Activated T-helper 2 cell treated with anti-CD3 and anti-CD28 coated beads, Interferon-gamma antibody, Interleukin-2, Interleukin-4, amounts not matched to agents 10 μg/mL and 5 μg/mL and 100 μg/mL, durations not matched to agents 14 hours and 24 hours and 36 hours (primary cell): ENCODE measurements at regions of chr14 and their contacts with region 1.

Region 1: GRCh38 chr14:95561001-95561412 is 26.2 kb downstream of the GLRX5 start:
- DNase-seq: peak; percentile 80
- H3K4me3 Mint-ChIP-seq: no peak overlapping the region
- H3K27ac Mint-ChIP-seq: no peak overlapping the region
- H3K4me1 Mint-ChIP-seq: peaks cover 2% of the 10 kb centered on the region
- H3K27me3 Mint-ChIP-seq: peaks cover 9% of the 10 kb centered on the region

Region 2: GRCh38 chr14:95123891-95124579 is 437.0 kb before region 1 on chr14:
- intact Hi-C with region 1: no loop called
- DNase-seq: no peak
- H3K4me3 Mint-ChIP-seq: no peak overlapping the region
- H3K27ac Mint-ChIP-seq: no peak overlapping the region
- H3K4me1 Mint-ChIP-seq: peaks cover 13% of the 10 kb centered on the region
- H3K27me3 Mint-ChIP-seq: no peaks in the 10 kb centered on the region

Region 3: GRCh38 chr14:95527387-95528002 is 33.5 kb before region 1 on chr14:
- intact Hi-C with region 1: no loop called
- DNase-seq: no peak
- H3K4me3 Mint-ChIP-seq: no peak overlapping the region
- H3K27ac Mint-ChIP-seq: peak overlapping the region; percentile 84
- H3K4me1 Mint-ChIP-seq: peaks cover 74% of the 10 kb centered on the region
- H3K27me3 Mint-ChIP-seq: no peaks in the 10 kb centered on the region

Region 4: DNA sequence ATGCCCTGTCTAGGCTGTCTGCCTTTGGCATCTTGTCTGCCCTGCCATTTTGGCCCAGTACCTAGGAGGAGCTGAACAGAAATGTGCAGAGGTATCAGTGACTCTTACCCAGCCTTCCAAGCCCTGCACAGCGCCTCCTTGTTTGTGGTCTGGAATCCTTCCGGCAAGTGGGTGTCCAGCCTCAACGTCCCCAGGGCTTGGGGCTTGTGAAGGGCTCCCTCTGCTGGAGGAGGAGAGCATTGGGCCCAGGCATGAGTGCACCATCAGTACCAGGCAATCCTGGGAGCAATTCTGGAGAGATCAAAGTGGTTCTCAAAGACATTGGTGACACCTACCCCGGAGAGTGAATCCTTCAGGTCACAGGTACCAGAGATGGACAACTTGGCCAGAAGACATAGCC is 122.8 kb after region 1 on chr14:
- intact Hi-C with region 1: loop called (anchors 1 kb)
- DNase-seq: no peak
- H3K4me3 Mint-ChIP-seq: no peak overlapping the region
- H3K27ac Mint-ChIP-seq: no peak overlapping the region
- H3K4me1 Mint-ChIP-seq: no peaks in the 10 kb centered on the region
- H3K27me3 Mint-ChIP-seq: peaks cover 9% of the 10 kb centered on the region

Region 5: GRCh38 chr14:95774265-95775160 is 213.5 kb after region 1 on chr14:
- intact Hi-C with region 1: loop called (anchors 1 kb)
- DNase-seq: peak; percentile 22
- H3K4me3 Mint-ChIP-seq: no peak overlapping the region
- H3K27ac Mint-ChIP-seq: no peak overlapping the region
- H3K4me1 Mint-ChIP-seq: no peaks in the 10 kb centered on the region
- H3K27me3 Mint-ChIP-seq: no peaks in the 10 kb centered on the region

Region 6: GRCh38 chr14:95993768-95994592 is 433.0 kb after region 1 on chr14:
- intact Hi-C with region 1: loop called (anchors 1 kb)
- DNase-seq: no peak
- H3K4me3 Mint-ChIP-seq: no peak overlapping the region
- H3K27ac Mint-ChIP-seq: no peak overlapping the region
- H3K4me1 Mint-ChIP-seq: no peaks in the 10 kb centered on the region
- H3K27me3 Mint-ChIP-seq: peaks cover 9% of the 10 kb centered on the region

Region 7: GRCh38 chr14:96275177-96276112 is 714.4 kb after region 1 on chr14:
- intact Hi-C with region 1: loop called (anchors 2 kb)
- DNase-seq: peak; percentile 25
- H3K4me3 Mint-ChIP-seq: no peak overlapping the region
- H3K27ac Mint-ChIP-seq: no peak overlapping the region
- H3K4me1 Mint-ChIP-seq: no peaks in the 10 kb centered on the region
- H3K27me3 Mint-ChIP-seq: no peaks in the 10 kb centered on the region